ENCODE measurements at regions of chr9 and their contacts with region 1.

Region 1: GRCh38 chr9:99954819-99955218 is 48.4 kb downstream of the STX17 start:
- DNase-seq: no peak
- H3K4me3 Mint-ChIP-seq: no peak overlapping the region
- H3K27ac Mint-ChIP-seq: peak overlapping the region; percentile 1
- H3K4me1 Mint-ChIP-seq: peaks cover 10% of the 10 kb centered on the region
- H3K27me3 Mint-ChIP-seq: no peaks in the 10 kb centered on the region

Region 2: GRCh38 chr9:99807276-99807852 is 147.5 kb before region 1 on chr9:
- intact Hi-C with region 1: loop called (anchors 1 kb)
- DNase-seq: peak; percentile 89
- H3K4me3 Mint-ChIP-seq: no peak overlapping the region
- H3K27ac Mint-ChIP-seq: no peak overlapping the region
- H3K4me1 Mint-ChIP-seq: peaks cover 23% of the 10 kb centered on the region
- H3K27me3 Mint-ChIP-seq: peaks cover 22% of the 10 kb centered on the region

Region 3: GRCh38 chr9:99921875-99922710 is 32.7 kb before region 1 on chr9:
- intact Hi-C with region 1: no loop called
- DNase-seq: no peak
- H3K4me3 Mint-ChIP-seq: no peak overlapping the region
- H3K27ac Mint-ChIP-seq: peak overlapping the region; percentile 59
- H3K4me1 Mint-ChIP-seq: peaks cover 31% of the 10 kb centered on the region
- H3K27me3 Mint-ChIP-seq: no peaks in the 10 kb centered on the region

Region 4: GRCh38 chr9:100084734-100085133 is 129.9 kb after region 1 on chr9:
- intact Hi-C with region 1: loop called (anchors 2 kb)
- DNase-seq: no peak
- H3K4me3 Mint-ChIP-seq: peak overlapping the region; percentile 27
- H3K27ac Mint-ChIP-seq: no peak overlapping the region
- H3K4me1 Mint-ChIP-seq: peaks cover 49% of the 10 kb centered on the region
- H3K27me3 Mint-ChIP-seq: no peaks in the 10 kb centered on the region

Measured in activated CD4-positive, alpha-beta T cell treated with anti-CD3 and anti-CD28 coated beads, Interleukin-2, amount 10 ng/mL, durations not matched to agents 24 days and 14 days (primary cell).